Dendritic cell treated with granulocyte-macrophage colony-stimulating factor and Interleukin-4, amounts not matched to agents 40 ng/mL and 50 ng/mL, for 4 days (primary cell): ENCODE measurements at regions of chr13 and their contacts with region 1.

Region 1: GRCh38 chr13:22161871-22162270 is 491.0 kb downstream of the FGF9 start:
- H3K4me3 Mint-ChIP-seq: no peak overlapping the region
- H3K27ac Mint-ChIP-seq: no peak overlapping the region
- H3K4me1 Mint-ChIP-seq: peaks cover 20% of the 10 kb centered on the region
- H3K27me3 Mint-ChIP-seq: peaks cover 3% of the 10 kb centered on the region

Region 2: GRCh38 chr13:22126433-22127021 is 35.3 kb before region 1 on chr13:
- intact Hi-C with region 1: loop called (anchors 5 kb)
- H3K4me3 Mint-ChIP-seq: no peak overlapping the region
- H3K27ac Mint-ChIP-seq: no peak overlapping the region
- H3K4me1 Mint-ChIP-seq: peaks cover 31% of the 10 kb centered on the region
- H3K27me3 Mint-ChIP-seq: peaks cover 40% of the 10 kb centered on the region

Region 3: DNA sequence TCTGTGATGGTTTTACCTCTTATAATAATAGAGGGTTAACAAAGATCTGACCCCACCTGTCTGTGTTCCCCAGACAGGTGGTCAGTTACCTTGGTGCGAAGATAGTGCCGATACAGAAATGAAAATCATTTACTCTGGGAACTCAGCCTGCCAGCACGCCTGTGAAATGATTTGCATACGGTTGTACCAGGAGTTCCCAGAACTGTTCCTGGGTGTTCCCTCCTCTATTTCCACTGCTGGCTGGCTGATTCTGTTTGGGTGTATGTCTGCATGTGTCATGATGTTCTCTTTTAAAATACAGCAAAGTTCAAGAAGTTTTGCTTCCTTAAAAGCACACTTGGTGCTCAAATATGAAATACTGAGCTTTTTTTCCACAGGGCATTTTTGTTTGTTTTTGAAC is 36.1 kb after region 1 on chr13:
- intact Hi-C with region 1: no loop called
- H3K4me3 Mint-ChIP-seq: no peak overlapping the region
- H3K27ac Mint-ChIP-seq: no peak overlapping the region
- H3K4me1 Mint-ChIP-seq: peaks cover 6% of the 10 kb centered on the region
- H3K27me3 Mint-ChIP-seq: no peaks in the 10 kb centered on the region